CD4-positive, alpha-beta T cell (primary cell): ENCODE measurements at regions of chr17 and their contacts with region 1.

Region 1: GRCh38 chr17:39754161-39754951 is 16.6 kb downstream of the GRB7 start:
- DNase-seq: peak; percentile 92 to 99 (median 97)
- ATAC-seq: peak; percentile 72
- H3K4me3 ChIP-seq: peak overlapping the region; percentile 71
- H3K4me3 Mint-ChIP-seq: peak overlapping the region; percentile 87
- H3K27ac ChIP-seq: peak overlapping the region; percentile 95 to 97
- H3K27ac Mint-ChIP-seq: peak overlapping the region; percentile 92
- H3K4me1 ChIP-seq: peaks cover 59% of the 10 kb centered on the region
- H3K4me1 Mint-ChIP-seq: peaks cover 56% of the 10 kb centered on the region
- H3K27me3 ChIP-seq: no peaks in the 10 kb centered on the region
- H3K27me3 Mint-ChIP-seq: no peaks in the 10 kb centered on the region
- CTCF ChIP-seq: peak; percentile 89

Region 2: DNA sequence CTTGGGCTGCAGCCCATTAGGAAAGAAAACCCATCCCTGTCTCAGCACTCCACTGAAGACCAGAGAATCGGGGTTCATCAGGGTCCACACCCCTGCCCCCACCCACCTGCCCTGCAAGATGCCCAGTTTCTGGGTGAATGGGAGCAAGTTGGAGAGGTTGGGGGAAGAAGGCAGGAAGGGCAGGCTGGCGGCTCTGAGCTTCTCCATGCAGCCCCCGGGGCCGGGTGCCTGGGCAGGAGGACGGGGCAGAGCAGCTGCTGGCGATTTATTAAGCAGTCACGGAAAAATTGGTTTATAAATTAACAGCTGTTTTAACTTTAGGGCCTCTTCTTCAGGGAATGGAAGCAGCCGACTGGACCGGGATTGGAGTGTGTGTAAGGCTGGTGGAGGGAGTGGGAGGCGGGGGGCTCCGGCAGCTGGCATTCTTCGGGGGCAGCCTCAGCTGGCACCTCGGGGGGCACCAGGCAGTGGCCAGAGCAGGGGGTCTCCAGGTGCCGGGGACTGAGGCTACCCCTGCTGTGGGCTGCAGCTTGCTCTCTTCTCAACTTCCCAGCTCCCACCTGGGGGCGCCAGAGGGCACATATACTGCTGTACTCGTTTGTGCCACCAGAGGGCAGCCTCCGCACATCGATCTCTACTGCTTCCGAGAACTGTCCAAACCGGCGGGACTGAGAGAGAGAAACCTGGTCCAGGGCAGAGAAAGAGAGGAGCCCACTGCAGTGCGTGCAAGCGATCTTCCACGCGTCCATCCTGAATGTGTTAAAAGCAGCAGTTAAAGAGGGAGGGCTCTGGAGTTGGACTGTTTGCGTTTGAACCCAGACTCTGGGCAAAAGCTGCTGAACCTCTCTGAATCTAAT is 132.6 kb before region 1 on chr17:
- CTCF ChIA-PET with region 1: interaction called, 42 read pairs
- POLR2A ChIA-PET with region 1: interaction called, 11 read pairs
- intact Hi-C with region 1: loop called (anchors 1 kb)
- DNase-seq: peak; percentile 67 to 96 (median 88)
- ATAC-seq: peak; percentile 74
- H3K4me3 ChIP-seq: peak overlapping the region; percentile 25
- H3K4me3 Mint-ChIP-seq: peak overlapping the region; percentile 62
- H3K27ac ChIP-seq: no peak overlapping the region
- H3K27ac Mint-ChIP-seq: peak overlapping the region; percentile 74
- H3K4me1 ChIP-seq: peaks cover 48% of the 10 kb centered on the region
- H3K4me1 Mint-ChIP-seq: peaks cover 25% of the 10 kb centered on the region
- H3K27me3 ChIP-seq: peaks cover 15 to 19% of the 10 kb centered on the region in 2 experiments
- H3K27me3 Mint-ChIP-seq: peaks cover 30% of the 10 kb centered on the region
- CTCF ChIP-seq: peak; percentile 100

Region 3: GRCh38 chr17:39769974-39770587 is 15.7 kb after region 1 on chr17:
- CTCF ChIA-PET with region 1: interaction called, 34 read pairs
- POLR2A ChIA-PET with region 1: interaction called, 46 read pairs
- intact Hi-C with region 1: loop called in 1 of 2 experiments (anchors 1 kb)
- DNase-seq: peak; percentile 23 to 87 (median 55)
- ATAC-seq: peak; percentile 83
- H3K4me3 ChIP-seq: peak overlapping the region; percentile 6
- H3K4me3 Mint-ChIP-seq: peak overlapping the region; percentile 8
- H3K27ac ChIP-seq: peak overlapping the region; percentile 66 to 87
- H3K27ac Mint-ChIP-seq: peak overlapping the region; percentile 84
- H3K4me1 ChIP-seq: peaks cover 82% of the 10 kb centered on the region
- H3K4me1 Mint-ChIP-seq: peaks cover 100% of the 10 kb centered on the region
- H3K27me3 ChIP-seq: no peaks in the 10 kb centered on the region
- H3K27me3 Mint-ChIP-seq: no peaks in the 10 kb centered on the region
- CTCF ChIP-seq: no peak

Region 4: GRCh38 chr17:39800540-39800939 is 46.2 kb after region 1 on chr17:
- CTCF ChIA-PET with region 1: interaction called, 3 read pairs
- POLR2A ChIA-PET with region 1: interaction called, 4 read pairs
- intact Hi-C with region 1: loop called in 1 of 2 experiments (anchors 1 kb)
- DNase-seq: peak in 13 of 14 experiments; percentile 37 to 88 (median 51)
- ATAC-seq: peak; percentile 98
- H3K4me3 ChIP-seq: no peak overlapping the region
- H3K4me3 Mint-ChIP-seq: peak overlapping the region; percentile 39
- H3K27ac ChIP-seq: peak overlapping the region; percentile 24 to 58
- H3K27ac Mint-ChIP-seq: peak overlapping the region; percentile 92
- H3K4me1 ChIP-seq: peaks cover 33% of the 10 kb centered on the region
- H3K4me1 Mint-ChIP-seq: peaks cover 65% of the 10 kb centered on the region
- H3K27me3 ChIP-seq: no peaks in the 10 kb centered on the region
- H3K27me3 Mint-ChIP-seq: no peaks in the 10 kb centered on the region
- CTCF ChIP-seq: no peak

Region 5: GRCh38 chr17:39863918-39864746 is 109.8 kb after region 1 on chr17 and contains the start of gene IKZF3:
- CTCF ChIA-PET with region 1: interaction called, 52 read pairs
- POLR2A ChIA-PET with region 1: interaction called, 52 read pairs
- intact Hi-C with region 1: loop called (anchors 1 to 2 kb)
- DNase-seq: peak; percentile 55 to 95 (median 73)
- ATAC-seq: peak; percentile 75
- H3K4me3 ChIP-seq: peak within 1 kb of the TSS; percentile 80
- H3K4me3 Mint-ChIP-seq: peak within 1 kb of the TSS; percentile 96
- H3K27ac ChIP-seq: peak within 1 kb of the TSS; percentile 88 to 89
- H3K27ac Mint-ChIP-seq: peak within 1 kb of the TSS; percentile 94
- H3K4me1 ChIP-seq: peaks cover 37% of the 10 kb centered on the region
- H3K4me1 Mint-ChIP-seq: peaks cover 81% of the 10 kb centered on the region
- H3K27me3 ChIP-seq: no peaks in the 10 kb centered on the region
- H3K27me3 Mint-ChIP-seq: no peaks in the 10 kb centered on the region
- CTCF ChIP-seq: peak; percentile 54
- total RNA-seq, gene IKZF3: 39.7 to 39.9 TPM